Heart right ventricle (tissue), 16 donors: ENCODE measurements at regions of chr18 and their contacts with region 1.

Region 1: GRCh38 chr18:40075616-40076015 is 1879.4 kb upstream of the PIK3C3 start:
- DNase-seq: no peak
- ATAC-seq: no peak
- H3K4me3 ChIP-seq: no peak overlapping the region
- H3K27ac ChIP-seq: no peak overlapping the region
- H3K4me1 ChIP-seq: no peaks in the 10 kb centered on the region
- H3K27me3 ChIP-seq: no peaks in the 10 kb centered on the region
- CTCF ChIP-seq: no peak

Region 2: GRCh38 chr18:39486268-39486667 is 589.3 kb before region 1 on chr18:
- intact Hi-C with region 1: no loop called
- DNase-seq: no peak
- ATAC-seq: no peak
- H3K4me3 ChIP-seq: no peak overlapping the region
- H3K27ac ChIP-seq: no peak overlapping the region
- H3K4me1 ChIP-seq: no peaks in the 10 kb centered on the region
- H3K27me3 ChIP-seq: no peaks in the 10 kb centered on the region
- CTCF ChIP-seq: no peak

Region 3: GRCh38 chr18:39513186-39513585 is 562.4 kb before region 1 on chr18:
- intact Hi-C with region 1: no loop called
- DNase-seq: no peak
- ATAC-seq: no peak
- H3K4me3 ChIP-seq: no peak overlapping the region
- H3K27ac ChIP-seq: no peak overlapping the region
- H3K4me1 ChIP-seq: no peaks in the 10 kb centered on the region
- H3K27me3 ChIP-seq: no peaks in the 10 kb centered on the region
- CTCF ChIP-seq: no peak

Region 4: GRCh38 chr18:39713961-39714360 is 361.7 kb before region 1 on chr18:
- intact Hi-C with region 1: no loop called
- DNase-seq: no peak
- ATAC-seq: no peak
- H3K4me3 ChIP-seq: no peak overlapping the region
- H3K27ac ChIP-seq: no peak overlapping the region
- H3K4me1 ChIP-seq: no peaks in the 10 kb centered on the region
- H3K27me3 ChIP-seq: no peaks in the 10 kb centered on the region
- CTCF ChIP-seq: no peak

Region 5: DNA sequence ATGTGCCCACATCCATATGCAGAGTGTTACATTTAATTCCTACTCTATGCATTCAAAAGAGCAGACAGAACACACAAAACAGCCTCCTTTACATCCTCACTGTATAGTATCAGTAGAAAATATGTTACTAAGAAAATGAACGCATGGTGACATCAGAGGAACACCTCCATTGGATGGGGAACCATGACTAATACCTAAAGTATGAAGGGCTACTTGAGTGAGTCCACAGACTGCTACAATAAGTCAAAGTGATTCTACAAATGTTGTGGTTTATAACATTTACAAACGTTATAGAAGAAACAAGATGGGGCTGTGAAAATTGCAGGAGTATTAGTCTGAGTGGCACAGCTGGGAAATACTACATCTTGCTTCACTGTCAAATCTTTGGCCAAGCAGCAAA is 48.5 kb after region 1 on chr18:
- intact Hi-C with region 1: loop called in 1 of 10 experiments (anchors 10 kb)
- DNase-seq: no peak
- ATAC-seq: no peak
- H3K4me3 ChIP-seq: no peak overlapping the region
- H3K27ac ChIP-seq: no peak overlapping the region
- H3K4me1 ChIP-seq: no peaks in the 10 kb centered on the region
- H3K27me3 ChIP-seq: no peaks in the 10 kb centered on the region
- CTCF ChIP-seq: no peak

Region 6: GRCh38 chr18:40534723-40535122 is 459.1 kb after region 1 on chr18:
- intact Hi-C with region 1: no loop called
- DNase-seq: no peak
- ATAC-seq: no peak
- H3K4me3 ChIP-seq: no peak overlapping the region
- H3K27ac ChIP-seq: no peak overlapping the region
- H3K4me1 ChIP-seq: no peaks in the 10 kb centered on the region
- H3K27me3 ChIP-seq: no peaks in the 10 kb centered on the region
- CTCF ChIP-seq: no peak